K562 (cell line): ENCODE measurements at regions of chr18 and their contacts with region 1.

Region 1: DNA sequence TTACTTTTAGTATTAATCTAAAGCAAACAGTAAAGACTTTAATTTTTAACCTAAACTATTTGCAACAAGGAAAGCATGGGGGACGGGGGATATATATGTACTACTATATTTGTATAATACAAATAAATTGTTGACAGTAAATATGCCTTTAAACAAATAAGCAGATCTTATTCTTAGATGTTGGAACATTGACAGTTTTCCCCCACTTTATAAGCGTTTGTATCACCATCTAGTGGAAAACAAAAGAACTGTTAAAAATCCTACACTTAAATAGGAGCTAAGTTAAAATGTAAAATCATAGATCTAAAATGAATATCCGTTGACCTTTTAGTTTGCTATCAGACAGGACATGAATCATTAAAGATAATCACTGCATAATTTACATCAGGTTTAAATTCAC is 50.0 kb downstream of the RBBP8 start:
- DNase-seq: peak in 2 of 4 experiments; percentile 18 to 19
- ATAC-seq: peak; percentile 59; the same call in 1 of the 3 replicates
- H3K4me3 ChIP-seq: no peak overlapping the region
- H3K27ac ChIP-seq: no peak overlapping the region
- H3K4me1 ChIP-seq: no peaks in the 10 kb centered on the region
- H3K27me3 ChIP-seq: no peaks in the 10 kb centered on the region
- CTCF ChIP-seq: peak in 2 of 3 experiments; percentile 35 to 71; a peak in 3 of 6 replicates
- EP300 ChIP-seq: no peak
- POLR2A ChIP-seq: no peak
- RAD21 ChIP-seq: peak; percentile 78

Region 2: DNA sequence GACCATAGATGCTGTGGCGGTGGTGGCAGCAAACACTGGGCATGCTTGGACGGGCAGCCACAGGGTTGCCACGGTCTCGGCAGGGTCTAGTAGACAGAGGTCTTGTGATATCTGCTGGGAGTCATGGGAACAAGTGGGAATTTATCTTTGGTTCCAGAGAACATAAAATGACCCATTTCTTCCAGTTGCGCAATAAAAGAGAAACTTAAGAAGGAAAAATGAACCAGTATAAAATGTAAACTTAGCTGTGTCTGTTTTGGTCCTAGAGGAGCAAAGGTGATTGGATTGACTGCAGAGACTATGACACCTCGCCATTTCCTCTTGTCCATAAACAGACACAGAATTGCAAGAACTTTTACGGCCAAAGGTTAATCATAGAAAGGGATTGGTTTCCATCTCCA is 182.6 kb before region 1 on chr18:
- CTCF ChIA-PET with region 1: interaction called, 15 read pairs
- POLR2A ChIA-PET with region 1: no interaction called
- in situ Hi-C with region 1: no loop called
- intact Hi-C with region 1: loop called (anchors 5 kb)
- DNase-seq: no peak
- ATAC-seq: no peak
- H3K4me3 ChIP-seq: no peak overlapping the region
- H3K27ac ChIP-seq: no peak overlapping the region
- H3K4me1 ChIP-seq: peaks cover 0 to 3% of the 10 kb centered on the region in 2 experiments; a peak in 1 of 5 replicates
- H3K27me3 ChIP-seq: peaks cover 0 to 3% of the 10 kb centered on the region in 2 experiments; a peak in 2 of 5 replicates
- CTCF ChIP-seq: no peak
- EP300 ChIP-seq: no peak
- POLR2A ChIP-seq: no peak
- RAD21 ChIP-seq: no peak

Region 3: DNA sequence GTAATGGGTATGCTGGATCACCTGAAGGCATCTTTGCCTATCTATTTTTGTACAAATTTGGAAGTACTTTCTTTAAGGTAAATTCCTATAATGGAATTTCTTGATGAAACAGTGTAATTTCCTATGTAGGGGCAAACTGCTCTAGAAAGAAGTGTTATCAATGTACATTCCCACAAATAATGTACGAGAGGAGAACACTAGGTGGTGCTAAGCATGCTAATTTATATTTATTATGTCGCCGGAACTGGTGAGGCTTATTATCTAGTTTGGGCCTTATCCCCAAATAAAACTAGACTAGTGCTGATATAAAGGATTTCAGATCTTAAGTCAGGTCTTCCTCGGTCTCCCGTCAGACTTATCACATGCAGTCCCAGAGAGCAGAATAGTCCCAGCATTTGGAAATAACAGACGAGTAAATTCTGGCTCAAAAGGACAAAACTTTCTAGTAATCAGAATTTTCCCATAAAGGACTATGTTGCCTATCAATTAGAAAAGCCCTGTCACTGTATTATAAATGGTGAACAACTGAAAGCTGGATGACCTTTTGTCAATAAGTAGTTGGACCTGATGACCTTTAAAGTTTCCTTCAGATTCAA is 137.0 kb before region 1 on chr18:
- CTCF ChIA-PET with region 1: interaction called, 8 read pairs
- POLR2A ChIA-PET with region 1: no interaction called
- in situ Hi-C with region 1: no loop called
- intact Hi-C with region 1: loop called (anchors 5 kb)
- DNase-seq: peak; percentile 14 to 34 (median 22)
- ATAC-seq: peak; percentile 74
- H3K4me3 ChIP-seq: no peak overlapping the region
- H3K27ac ChIP-seq: no peak overlapping the region
- H3K4me1 ChIP-seq: no peaks in the 10 kb centered on the region
- H3K27me3 ChIP-seq: peaks cover 0 to 5% of the 10 kb centered on the region in 2 experiments; a peak in 1 of 5 replicates
- CTCF ChIP-seq: peak; percentile 37 to 63 (median 56); a peak in 4 of 6 replicates
- EP300 ChIP-seq: no peak
- POLR2A ChIP-seq: no peak
- RAD21 ChIP-seq: peak; percentile 51 to 61

Region 4: GRCh38 chr18:22964116-22964515 is 19.1 kb before region 1 on chr18:
- CTCF ChIA-PET with region 1: no interaction called
- POLR2A ChIA-PET with region 1: no interaction called
- in situ Hi-C with region 1: no loop called
- intact Hi-C with region 1: no loop called
- DNase-seq: no peak
- ATAC-seq: no peak
- H3K4me3 ChIP-seq: no peak overlapping the region
- H3K27ac ChIP-seq: no peak overlapping the region
- H3K4me1 ChIP-seq: no peaks in the 10 kb centered on the region
- H3K27me3 ChIP-seq: no peaks in the 10 kb centered on the region
- CTCF ChIP-seq: no peak
- EP300 ChIP-seq: no peak
- POLR2A ChIP-seq: no peak
- RAD21 ChIP-seq: no peak

Region 5: GRCh38 chr18:23020555-23021294 is 37.5 kb after region 1 on chr18:
- CTCF ChIA-PET with region 1: no interaction called
- POLR2A ChIA-PET with region 1: no interaction called
- in situ Hi-C with region 1: no loop called
- intact Hi-C with region 1: no loop called
- DNase-seq: no peak
- ATAC-seq: no peak
- H3K4me3 ChIP-seq: no peak overlapping the region
- H3K27ac ChIP-seq: no peak overlapping the region
- H3K4me1 ChIP-seq: no peaks in the 10 kb centered on the region
- H3K27me3 ChIP-seq: no peaks in the 10 kb centered on the region
- CTCF ChIP-seq: no peak
- EP300 ChIP-seq: no peak
- POLR2A ChIP-seq: no peak
- RAD21 ChIP-seq: no peak

Region 6: GRCh38 chr18:23059541-23060465 is 76.6 kb after region 1 on chr18:
- CTCF ChIA-PET with region 1: no interaction called
- POLR2A ChIA-PET with region 1: no interaction called
- in situ Hi-C with region 1: no loop called
- intact Hi-C with region 1: no loop called
- DNase-seq: no peak
- ATAC-seq: no peak
- H3K4me3 ChIP-seq: no peak overlapping the region
- H3K27ac ChIP-seq: no peak overlapping the region
- H3K4me1 ChIP-seq: no peaks in the 10 kb centered on the region
- H3K27me3 ChIP-seq: peaks cover 20 to 24% of the 10 kb centered on the region in 2 experiments
- CTCF ChIP-seq: no peak
- EP300 ChIP-seq: no peak
- POLR2A ChIP-seq: no peak
- RAD21 ChIP-seq: no peak